Dorsolateral prefrontal cortex (tissue), 120 donors: ENCODE measurements at regions of chr17 and their contacts with region 1.

Region 1: GRCh38 chr17:60481604-60482003 is 44.4 kb downstream of the APPBP2 start:
- DNase-seq: no peak
- H3K4me3 ChIP-seq: peak overlapping the region in 9 of 59 donors; percentile 1 to 40 (median 19)
- H3K27ac ChIP-seq: peak overlapping the region; percentile 52 to 100 (median 92)
- H3K27me3 ChIP-seq: no peaks in the 10 kb centered on the region
- CTCF ChIP-seq: peak in 3 of 56 donors; percentile 14 to 24 (median 21)

Region 2: GRCh38 chr17:60442271-60443173 is 39.1 kb before region 1 on chr17:
- intact Hi-C with region 1: loop called (anchors 5 kb)
- DNase-seq: no peak
- H3K4me3 ChIP-seq: peak overlapping the region in 27 of 59 donors; percentile 0 to 39 (median 10)
- H3K27ac ChIP-seq: peak overlapping the region; percentile 40 to 97 (median 87)
- H3K27me3 ChIP-seq: no peaks in the 10 kb centered on the region
- CTCF ChIP-seq: peak in 9 of 56 donors; percentile 9 to 31 (median 16)